Stomach (tissue), 19 donors: ENCODE measurements at regions of chr5 and their contacts with region 1.

Region 1: GRCh38 chr5:180289433-180289832 is 2.5 kb downstream of the MAPK9 start:
- DNase-seq: peak; percentile 68 to 76
- H3K4me3 ChIP-seq: no peak overlapping the region
- H3K27ac ChIP-seq: peak overlapping the region in 2 of 5 donors; percentile 18 to 38
- H3K4me1 ChIP-seq: peaks cover 8 to 46% (median 41%) of the 10 kb centered on the region in 4 donors
- H3K27me3 ChIP-seq: no peaks in the 10 kb centered on the region
- CTCF ChIP-seq: peak in 1 of 7 experiments; percentile 6
- EP300 ChIP-seq: no peak
- POLR2A ChIP-seq: no peak

Region 2: DNA sequence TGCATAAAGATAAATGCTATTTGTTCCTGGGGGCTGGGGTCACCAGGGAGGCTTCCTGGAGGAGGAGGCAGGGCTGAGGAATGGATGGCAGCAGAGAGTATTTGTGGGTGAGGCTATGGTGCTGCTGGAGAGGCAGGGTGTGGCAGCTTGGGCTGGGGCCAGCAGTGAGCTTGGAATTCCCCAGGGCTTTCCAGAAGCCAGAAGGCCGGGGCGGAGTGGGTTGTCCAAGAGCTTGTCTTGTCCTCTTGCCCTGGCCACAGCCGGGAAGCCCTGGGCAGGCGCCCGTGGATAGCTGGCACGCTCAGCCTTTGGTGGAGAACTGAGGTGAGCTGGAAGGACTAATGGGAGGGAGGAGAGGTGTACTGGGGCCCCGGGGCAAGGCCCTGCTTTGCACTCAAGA is 177.6 kb after region 1 on chr5:
- intact Hi-C with region 1: loop called (anchors 5 kb)
- DNase-seq: peak; percentile 70 to 72
- H3K4me3 ChIP-seq: no peak overlapping the region
- H3K27ac ChIP-seq: peak overlapping the region in 1 of 5 donors; percentile 24
- H3K4me1 ChIP-seq: peaks cover 0 to 26% (median 8%) of the 10 kb centered on the region in 4 donors
- H3K27me3 ChIP-seq: peaks cover 0 to 34% (median 0%) of the 10 kb centered on the region in 3 donors
- CTCF ChIP-seq: no peak
- EP300 ChIP-seq: no peak
- POLR2A ChIP-seq: no peak

Region 3: DNA sequence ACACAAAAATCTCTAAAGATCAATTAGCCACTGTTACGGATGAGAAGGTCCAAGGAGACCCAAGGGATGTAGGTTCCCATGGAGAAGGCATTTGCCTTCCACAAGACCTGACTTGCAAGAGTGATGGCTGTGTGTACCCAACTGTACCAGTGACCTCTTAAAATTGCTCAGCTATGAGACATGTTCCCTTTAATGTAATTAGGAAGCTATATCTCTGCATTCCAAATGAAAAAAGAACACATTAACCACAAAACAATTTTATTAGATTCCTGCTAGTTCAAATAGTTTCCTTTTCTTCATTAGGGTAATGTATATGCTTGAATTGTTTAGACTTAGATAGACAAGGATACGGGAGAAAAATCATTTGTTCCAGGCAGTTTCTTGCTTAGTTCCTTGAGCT is 447.1 kb after region 1 on chr5:
- intact Hi-C with region 1: no loop called
- DNase-seq: no peak
- H3K4me3 ChIP-seq: no peak overlapping the region
- H3K27ac ChIP-seq: no peak overlapping the region
- H3K4me1 ChIP-seq: no peaks in the 10 kb centered on the region
- H3K27me3 ChIP-seq: peaks cover 0 to 36% (median 4%) of the 10 kb centered on the region in 3 donors
- CTCF ChIP-seq: no peak
- EP300 ChIP-seq: no peak
- POLR2A ChIP-seq: no peak